HCT116 (cell line): ENCODE measurements at regions of chr5 and their contacts with region 1.

Region 1: GRCh38 chr5:149133795-149134780 is 7.2 kb upstream of the ABLIM3 start:
- DNase-seq: peak; percentile 89
- ATAC-seq: peak; percentile 89
- H3K4me3 ChIP-seq: 0 out of 4 replicates have a peak overlapping the region, but pooled peaks of 1 of the 2 experiments have one; percentile 20
- H3K27ac ChIP-seq: peak overlapping the region; percentile 21
- H3K4me1 ChIP-seq: peaks cover 9 to 27% of the 10 kb centered on the region in 2 experiments
- H3K27me3 ChIP-seq: no peaks in the 10 kb centered on the region
- CTCF ChIP-seq: no peak
- POLR2A ChIP-seq: no peak
- RAD21 ChIP-seq: no peak

Region 2: DNA sequence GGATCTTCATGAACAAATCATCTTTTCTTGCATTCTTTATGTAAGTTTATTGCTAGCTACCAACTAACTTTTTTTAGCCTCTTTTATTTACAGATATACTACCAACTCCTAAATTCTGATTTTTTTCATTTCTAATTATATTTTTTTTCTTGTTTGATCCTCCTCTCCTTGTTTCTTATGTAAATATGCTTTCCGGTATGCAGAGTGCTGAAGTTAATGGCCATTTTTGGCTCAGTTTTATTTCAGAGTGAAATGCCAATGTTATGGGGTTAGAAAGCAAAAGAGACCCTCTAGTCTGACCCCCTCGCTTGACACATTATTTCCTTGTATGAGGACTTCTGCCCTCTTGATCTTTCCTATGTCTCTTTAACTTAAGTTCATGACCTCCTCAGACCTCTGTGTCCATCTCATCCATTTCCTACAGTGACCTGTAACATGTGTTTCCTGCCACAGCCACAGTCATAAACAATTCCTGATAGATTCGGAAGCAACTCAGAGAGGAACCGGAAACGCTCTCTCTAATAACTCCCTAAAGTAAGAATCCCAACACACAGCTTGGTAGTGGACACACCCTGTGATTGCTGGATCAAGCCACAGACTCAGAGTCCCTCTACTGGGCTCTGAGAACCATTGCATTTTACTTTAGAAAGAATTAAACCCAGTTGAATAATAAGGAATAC is 94.7 kb after region 1 on chr5:
- CTCF ChIA-PET with region 1: interaction called, 14 read pairs
- POLR2A ChIA-PET with region 1: no interaction called
- RAD21 ChIA-PET with region 1: interaction called, 4 read pairs
- intact Hi-C with region 1: loop called (anchors 1 kb)
- DNase-seq: peak; percentile 89
- ATAC-seq: peak; percentile 98
- H3K4me3 ChIP-seq: no peak overlapping the region
- H3K27ac ChIP-seq: no peak overlapping the region
- H3K4me1 ChIP-seq: peaks cover 21 to 31% of the 10 kb centered on the region in 2 experiments
- H3K27me3 ChIP-seq: no peaks in the 10 kb centered on the region
- CTCF ChIP-seq: peak; percentile 72 to 97 (median 93)
- POLR2A ChIP-seq: no peak
- RAD21 ChIP-seq: peak; percentile 100

Region 3: DNA sequence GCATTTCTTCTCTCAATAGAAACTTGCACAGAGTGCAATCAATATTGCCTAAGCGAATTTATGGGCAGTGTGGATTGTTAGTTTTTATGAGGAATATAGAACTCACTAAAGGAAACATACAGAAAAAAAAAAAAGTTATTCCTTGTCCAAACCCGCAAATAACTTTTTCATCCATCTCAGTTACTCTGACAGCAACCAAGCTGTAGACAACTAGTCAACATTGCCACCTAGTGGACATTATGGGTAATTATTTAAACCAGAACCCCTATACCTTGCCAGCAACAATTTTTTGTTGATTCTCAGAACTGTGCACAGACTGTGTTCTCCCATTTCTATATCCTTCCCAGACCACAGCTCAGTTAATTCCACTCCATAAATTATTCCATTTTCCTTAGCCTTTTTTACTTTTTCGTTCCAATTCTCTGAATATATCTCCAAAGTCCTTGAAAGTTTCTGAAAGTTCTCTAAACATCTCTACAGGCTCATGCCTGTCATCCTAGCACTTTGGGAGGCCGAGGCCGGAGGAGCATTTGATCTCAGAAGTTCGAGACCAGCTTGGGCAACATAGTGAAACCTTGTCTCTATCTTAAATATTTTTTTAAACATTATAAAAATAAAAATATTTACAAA is 135.0 kb after region 1 on chr5:
- CTCF ChIA-PET with region 1: interaction called, 8 read pairs
- POLR2A ChIA-PET with region 1: no interaction called
- RAD21 ChIA-PET with region 1: interaction called in 1 of 2 experiments, 3 read pairs
- intact Hi-C with region 1: loop called (anchors 1 kb)
- DNase-seq: peak; percentile 55
- ATAC-seq: peak; percentile 26
- H3K4me3 ChIP-seq: no peak overlapping the region
- H3K27ac ChIP-seq: no peak overlapping the region
- H3K4me1 ChIP-seq: peaks cover 0 to 8% of the 10 kb centered on the region in 2 experiments; a peak in 2 of 4 replicates
- H3K27me3 ChIP-seq: no peaks in the 10 kb centered on the region
- CTCF ChIP-seq: peak; percentile 55 to 82 (median 69)
- POLR2A ChIP-seq: no peak
- RAD21 ChIP-seq: peak; percentile 82